SK-N-SH (cell line): ENCODE measurements at regions of chr7 and their contacts with region 1.

Region 1: GRCh38 chr7:130896898-130897514 is 163.0 kb upstream of the KLF14 start:
- DNase-seq: peak; percentile 86
- H3K4me3 ChIP-seq: peak overlapping the region in 1 of 2 experiments; percentile 1; a peak in 1 of 4 replicates
- H3K27ac ChIP-seq: peak overlapping the region; percentile 9 to 100; a peak in 3 of 4 replicates
- H3K4me1 ChIP-seq: peaks cover 9 to 68% of the 10 kb centered on the region in 2 experiments
- H3K27me3 ChIP-seq: no peaks in the 10 kb centered on the region
- CTCF ChIP-seq: peak; percentile 90
- EP300 ChIP-seq: no peak
- RAD21 ChIP-seq: peak; percentile 95

Region 2: DNA sequence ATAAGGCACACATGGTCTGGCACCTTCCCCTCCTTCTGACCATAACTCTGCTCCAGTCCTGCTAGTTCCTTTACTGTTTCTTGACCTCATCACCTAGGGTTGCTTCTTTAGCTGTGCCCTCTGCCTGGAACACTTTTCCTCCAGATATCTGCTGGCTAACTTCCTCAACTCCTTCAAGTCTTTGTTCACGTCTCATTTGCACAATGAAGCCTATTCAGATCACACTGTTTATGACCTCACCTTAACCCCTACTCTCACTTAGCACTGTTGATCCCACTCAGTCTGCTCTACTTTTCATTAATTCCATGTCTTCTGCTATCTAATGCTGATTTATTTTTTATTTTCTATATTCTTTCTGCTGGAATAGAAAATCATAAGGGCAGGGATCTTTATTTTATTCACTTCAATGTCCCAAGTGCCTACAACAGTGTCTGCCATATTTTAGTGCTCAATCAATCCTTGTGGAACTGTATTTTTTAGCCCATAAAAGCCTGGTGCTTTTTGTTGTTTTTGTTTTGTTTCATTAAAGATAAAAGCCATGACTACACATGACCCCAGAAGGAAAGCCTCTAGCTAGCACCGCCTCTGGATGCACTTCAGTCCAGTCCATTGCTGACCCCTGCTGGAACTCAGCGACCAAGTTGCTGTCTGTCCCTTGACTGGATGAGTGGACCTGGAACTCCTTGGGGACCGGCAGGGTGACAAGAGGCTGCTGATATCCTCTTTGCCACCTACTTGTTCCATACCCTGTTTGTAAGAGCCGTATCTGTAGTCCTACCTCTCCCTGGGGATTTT is 175.3 kb before region 1 on chr7:
- CTCF ChIA-PET with region 1: no interaction called
- POLR2A ChIA-PET with region 1: no interaction called
- DNase-seq: peak; percentile 80
- H3K4me3 ChIP-seq: no peak overlapping the region
- H3K27ac ChIP-seq: no peak overlapping the region
- H3K4me1 ChIP-seq: no peaks in the 10 kb centered on the region; a peak in 1 of 4 replicates
- H3K27me3 ChIP-seq: peaks cover 27% of the 10 kb centered on the region; the same call in 1 of the 2 replicates
- CTCF ChIP-seq: peak; percentile 84
- EP300 ChIP-seq: no peak
- RAD21 ChIP-seq: peak; percentile 99

Region 3: DNA sequence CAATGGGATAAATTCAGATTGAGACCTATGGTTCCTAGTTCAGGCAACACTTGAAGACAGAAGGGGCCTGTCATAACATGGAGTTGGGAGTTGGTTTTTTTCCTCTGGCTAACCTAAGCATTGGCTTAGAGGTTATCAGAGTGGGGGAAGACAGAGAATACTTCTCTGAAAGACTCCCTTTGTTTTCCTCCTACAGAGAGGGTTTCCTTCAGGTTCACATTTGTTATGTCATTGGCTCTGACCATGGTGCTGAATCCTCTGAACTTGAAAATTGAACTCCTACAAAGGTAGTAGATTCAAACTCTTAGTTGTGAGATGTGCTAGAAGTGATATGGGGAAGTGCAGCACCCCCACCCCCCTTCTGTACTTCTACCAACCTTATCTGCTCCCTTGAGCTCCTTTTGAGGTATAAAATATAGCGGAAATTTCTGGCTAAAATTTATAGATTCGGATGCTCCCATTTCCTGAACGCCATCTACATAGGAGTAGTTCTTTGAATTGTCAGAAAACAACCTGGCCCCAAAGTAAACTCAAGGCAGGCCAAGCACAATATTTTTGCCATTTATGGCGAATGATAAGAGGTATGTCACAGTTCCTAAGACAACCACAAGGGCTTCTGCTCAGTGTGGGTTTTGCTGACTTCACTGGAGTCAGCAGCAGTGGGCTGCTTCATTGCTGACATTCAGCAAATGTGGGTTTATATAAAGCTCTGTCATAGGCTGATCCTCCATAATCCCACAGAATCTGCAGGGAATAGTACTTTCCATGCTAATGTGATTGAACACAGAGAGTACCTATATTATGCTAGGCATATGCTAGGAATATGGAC is 31.4 kb before region 1 on chr7:
- CTCF ChIA-PET with region 1: interaction called, 95 read pairs
- POLR2A ChIA-PET with region 1: no interaction called
- DNase-seq: no peak
- H3K4me3 ChIP-seq: no peak overlapping the region
- H3K27ac ChIP-seq: no peak overlapping the region
- H3K4me1 ChIP-seq: no peaks in the 10 kb centered on the region
- H3K27me3 ChIP-seq: no peaks in the 10 kb centered on the region
- CTCF ChIP-seq: peak; percentile 23; the same call in 1 of the 2 replicates
- EP300 ChIP-seq: no peak
- RAD21 ChIP-seq: no peak

Region 4: GRCh38 chr7:130935564-130936157 is 38.7 kb after region 1 on chr7:
- CTCF ChIA-PET with region 1: interaction called, 36 read pairs
- POLR2A ChIA-PET with region 1: no interaction called
- DNase-seq: no peak
- H3K4me3 ChIP-seq: no peak overlapping the region
- H3K27ac ChIP-seq: no peak overlapping the region
- H3K4me1 ChIP-seq: peaks cover 0 to 25% of the 10 kb centered on the region in 2 experiments; a peak in 3 of 4 replicates
- H3K27me3 ChIP-seq: no peaks in the 10 kb centered on the region
- CTCF ChIP-seq: no peak
- EP300 ChIP-seq: no peak
- RAD21 ChIP-seq: no peak

Region 5: DNA sequence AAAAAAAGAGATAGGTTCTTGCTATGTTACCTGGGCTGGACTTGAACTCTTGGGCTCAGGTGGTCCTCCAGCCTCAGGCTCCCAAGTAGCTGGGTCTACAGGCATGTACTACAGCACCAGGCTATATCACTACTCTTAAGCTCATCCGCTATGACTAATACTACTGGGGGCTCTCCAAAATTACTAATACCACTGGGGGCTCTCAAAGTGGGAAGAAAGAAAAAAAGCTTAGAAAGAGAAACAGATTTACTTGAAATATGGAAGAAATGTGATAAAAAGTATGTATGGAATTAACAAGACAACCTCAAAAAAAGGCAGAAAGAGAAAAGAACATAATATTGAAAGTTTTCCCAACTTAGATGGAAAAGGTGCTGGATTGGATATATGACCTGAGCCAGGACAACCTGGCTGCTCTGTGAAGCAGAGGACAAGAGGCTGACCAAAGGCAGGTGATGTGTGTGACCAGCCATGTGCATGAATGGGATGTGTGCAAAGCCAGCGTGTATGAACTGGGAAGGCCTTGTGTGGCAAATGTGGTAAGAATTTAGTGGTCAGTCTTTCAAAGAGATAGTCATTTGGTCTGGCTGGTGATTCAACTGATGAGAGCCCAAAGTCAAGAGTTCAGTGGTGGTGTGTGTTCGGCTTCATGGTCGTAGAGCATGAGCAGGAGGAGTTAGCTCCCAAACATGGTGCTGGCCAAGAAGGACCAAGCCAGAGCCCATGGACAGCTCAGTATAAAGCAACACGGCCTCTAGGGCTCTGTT is 69.4 kb after region 1 on chr7:
- CTCF ChIA-PET with region 1: interaction called, 17 read pairs
- POLR2A ChIA-PET with region 1: no interaction called
- DNase-seq: no peak
- H3K4me3 ChIP-seq: no peak overlapping the region
- H3K27ac ChIP-seq: no peak overlapping the region
- H3K4me1 ChIP-seq: peaks cover 2 to 37% of the 10 kb centered on the region in 2 experiments; a peak in 3 of 4 replicates
- H3K27me3 ChIP-seq: no peaks in the 10 kb centered on the region
- CTCF ChIP-seq: no peak
- EP300 ChIP-seq: no peak
- RAD21 ChIP-seq: no peak

Region 6: GRCh38 chr7:131007394-131008330 is 110.7 kb after region 1 on chr7:
- CTCF ChIA-PET with region 1: interaction called, 33 read pairs
- POLR2A ChIA-PET with region 1: no interaction called
- DNase-seq: peak; percentile 57
- H3K4me3 ChIP-seq: no peak overlapping the region
- H3K27ac ChIP-seq: peak overlapping the region; percentile 93 to 95
- H3K4me1 ChIP-seq: peaks cover 20 to 54% of the 10 kb centered on the region in 2 experiments
- H3K27me3 ChIP-seq: no peaks in the 10 kb centered on the region
- CTCF ChIP-seq: peak; percentile 81
- EP300 ChIP-seq: no peak
- RAD21 ChIP-seq: peak; percentile 73

Region 7: GRCh38 chr7:131034166-131034881 is 137.3 kb after region 1 on chr7:
- CTCF ChIA-PET with region 1: interaction called, 186 read pairs
- POLR2A ChIA-PET with region 1: no interaction called
- DNase-seq: no peak
- H3K4me3 ChIP-seq: no peak overlapping the region
- H3K27ac ChIP-seq: no peak overlapping the region
- H3K4me1 ChIP-seq: peaks cover 6 to 17% of the 10 kb centered on the region in 2 experiments; a peak in 2 of 4 replicates
- H3K27me3 ChIP-seq: no peaks in the 10 kb centered on the region
- CTCF ChIP-seq: no peak
- EP300 ChIP-seq: no peak
- RAD21 ChIP-seq: no peak

Region 8: GRCh38 chr7:131057015-131057793 is 160.2 kb after region 1 on chr7:
- CTCF ChIA-PET with region 1: interaction called, 14 read pairs
- POLR2A ChIA-PET with region 1: no interaction called
- DNase-seq: no peak
- H3K4me3 ChIP-seq: no peak overlapping the region
- H3K27ac ChIP-seq: no peak overlapping the region
- H3K4me1 ChIP-seq: no peaks in the 10 kb centered on the region; a peak in 1 of 4 replicates
- H3K27me3 ChIP-seq: no peaks in the 10 kb centered on the region
- CTCF ChIP-seq: no peak
- EP300 ChIP-seq: no peak
- RAD21 ChIP-seq: no peak

Region 9: DNA sequence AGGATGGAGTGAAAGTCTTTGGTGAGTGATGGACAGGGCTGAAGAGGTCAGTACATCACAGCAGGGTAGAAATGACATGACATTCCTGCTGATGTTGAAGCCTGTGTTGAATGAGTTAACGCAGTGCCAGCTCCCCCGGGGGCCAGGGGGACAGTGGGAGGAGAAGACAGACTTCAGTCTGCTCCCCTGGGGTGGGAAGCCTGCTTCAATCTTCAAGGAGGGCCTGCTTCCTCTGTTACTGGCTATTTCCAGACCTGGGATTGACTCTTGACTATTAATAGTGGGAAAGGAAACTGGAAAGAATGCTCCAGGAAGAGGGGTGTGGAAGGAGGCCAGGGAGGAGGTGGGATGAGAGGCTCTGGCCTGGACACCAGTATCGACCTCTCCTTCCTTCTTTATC is 632.2 kb after region 1 on chr7:
- CTCF ChIA-PET with region 1: no interaction called
- POLR2A ChIA-PET with region 1: no interaction called
- DNase-seq: no peak
- H3K4me3 ChIP-seq: no peak overlapping the region
- H3K27ac ChIP-seq: peak overlapping the region in 1 of 2 experiments; percentile 3; a peak in 1 of 4 replicates
- H3K4me1 ChIP-seq: peaks cover 0 to 8% of the 10 kb centered on the region in 2 experiments; a peak in 1 of 4 replicates
- H3K27me3 ChIP-seq: no peaks in the 10 kb centered on the region
- CTCF ChIP-seq: no peak
- EP300 ChIP-seq: no peak
- RAD21 ChIP-seq: no peak